ENCODE measurements at regions of chr11 and their contacts with region 1.

Region 1: GRCh38 chr11:85464283-85464682 is 162.9 kb downstream of the DLG2 start:
- DNase-seq: peak; percentile 37
- ATAC-seq: peak; percentile 88
- H3K4me3 Mint-ChIP-seq: no peak overlapping the region
- H3K27ac Mint-ChIP-seq: 0 out of 2 replicates have a peak overlapping the region, but pooled peaks have one; percentile 54
- H3K4me1 Mint-ChIP-seq: peaks cover 14% of the 10 kb centered on the region
- H3K27me3 Mint-ChIP-seq: no peaks in the 10 kb centered on the region
- CTCF ChIP-seq: peak; percentile 26; the same call in 1 of the 2 replicates

Region 2: DNA sequence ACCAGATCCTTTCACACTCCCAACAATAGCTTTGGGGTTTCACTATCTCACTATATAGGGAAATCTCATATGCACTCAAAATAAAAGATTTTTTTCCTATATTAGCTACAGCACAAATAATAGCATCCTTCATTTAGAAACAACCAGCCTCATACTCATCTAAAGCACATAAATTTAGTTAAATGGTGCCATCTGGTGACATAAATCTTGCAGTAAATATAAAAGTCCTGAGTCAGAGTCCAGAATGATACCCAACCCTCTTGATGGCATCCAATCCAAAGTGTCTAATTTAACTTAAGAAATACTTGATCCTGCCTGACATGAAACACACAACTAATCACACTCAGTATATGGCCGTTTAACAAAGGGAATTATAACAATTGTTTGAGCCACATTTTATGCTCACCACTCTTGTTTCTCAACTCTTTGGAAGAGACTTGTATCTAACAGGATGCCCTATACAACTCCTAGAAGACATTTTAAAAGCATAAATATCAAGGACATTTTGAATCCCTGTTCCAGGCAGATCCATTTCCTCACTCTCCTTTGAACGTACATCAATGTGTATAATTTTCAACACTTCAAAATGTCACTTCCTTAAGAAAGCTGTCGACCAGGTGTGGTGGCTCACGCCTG is 126.7 kb after region 1 on chr11:
- CTCF ChIA-PET with region 1: interaction called, 44 read pairs
- POLR2A ChIA-PET with region 1: no interaction called
- DNase-seq: no peak
- ATAC-seq: peak; percentile 59
- H3K4me3 Mint-ChIP-seq: no peak overlapping the region
- H3K27ac Mint-ChIP-seq: no peak overlapping the region
- H3K4me1 Mint-ChIP-seq: peaks cover 18% of the 10 kb centered on the region
- H3K27me3 Mint-ChIP-seq: no peaks in the 10 kb centered on the region; the same call in 1 of the 2 replicates
- CTCF ChIP-seq: no peak

Region 3: DNA sequence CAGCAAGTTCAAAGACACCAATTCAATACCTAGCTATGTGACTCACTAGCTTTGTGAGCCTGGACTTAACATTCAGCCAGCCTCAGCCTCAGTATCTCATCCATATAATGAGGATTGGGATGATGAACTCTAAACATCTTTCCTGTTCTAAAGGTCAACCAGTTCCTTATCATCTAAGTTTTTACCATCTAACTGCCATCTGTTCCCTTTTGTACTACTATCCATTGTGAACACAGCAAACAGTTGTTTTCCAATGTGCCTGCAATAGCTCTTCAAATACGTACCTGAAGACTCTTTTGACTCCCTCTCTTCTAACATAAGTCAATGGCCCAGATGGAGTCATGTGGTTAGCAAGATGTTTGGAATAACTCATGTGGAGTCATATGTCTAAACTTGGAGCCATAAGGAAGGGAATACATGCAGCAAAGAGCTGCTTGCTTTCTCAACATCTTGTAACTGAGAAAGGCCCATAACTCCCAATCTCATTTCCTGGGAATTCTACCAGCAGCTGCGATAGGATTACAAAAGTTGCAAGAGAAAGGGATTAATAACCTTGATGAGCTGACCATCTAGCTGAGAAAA is 327.2 kb after region 1 on chr11:
- CTCF ChIA-PET with region 1: no interaction called
- POLR2A ChIA-PET with region 1: no interaction called
- DNase-seq: no peak
- ATAC-seq: no peak
- H3K4me3 Mint-ChIP-seq: no peak overlapping the region
- H3K27ac Mint-ChIP-seq: no peak overlapping the region
- H3K4me1 Mint-ChIP-seq: peaks cover 2% of the 10 kb centered on the region; the same call in 1 of the 2 replicates
- H3K27me3 Mint-ChIP-seq: no peaks in the 10 kb centered on the region
- CTCF ChIP-seq: no peak

Measured in WTC11 (cell line).